ENCODE measurements at regions of chr7 and their contacts with region 1.

Region 1: GRCh38 chr7:129433847-129434674 is at the start of gene STRIP2:
- DNase-seq: peak; percentile 94
- H3K4me3 Mint-ChIP-seq: peak within 1 kb of the TSS; percentile 85
- H3K27ac Mint-ChIP-seq: peak within 1 kb of the TSS; percentile 71
- H3K4me1 Mint-ChIP-seq: peaks cover 38% of the 10 kb centered on the region
- H3K27me3 Mint-ChIP-seq: peaks cover 6% of the 10 kb centered on the region
- total RNA-seq, gene STRIP2: 28.3 to 29.7 TPM

Region 2: DNA sequence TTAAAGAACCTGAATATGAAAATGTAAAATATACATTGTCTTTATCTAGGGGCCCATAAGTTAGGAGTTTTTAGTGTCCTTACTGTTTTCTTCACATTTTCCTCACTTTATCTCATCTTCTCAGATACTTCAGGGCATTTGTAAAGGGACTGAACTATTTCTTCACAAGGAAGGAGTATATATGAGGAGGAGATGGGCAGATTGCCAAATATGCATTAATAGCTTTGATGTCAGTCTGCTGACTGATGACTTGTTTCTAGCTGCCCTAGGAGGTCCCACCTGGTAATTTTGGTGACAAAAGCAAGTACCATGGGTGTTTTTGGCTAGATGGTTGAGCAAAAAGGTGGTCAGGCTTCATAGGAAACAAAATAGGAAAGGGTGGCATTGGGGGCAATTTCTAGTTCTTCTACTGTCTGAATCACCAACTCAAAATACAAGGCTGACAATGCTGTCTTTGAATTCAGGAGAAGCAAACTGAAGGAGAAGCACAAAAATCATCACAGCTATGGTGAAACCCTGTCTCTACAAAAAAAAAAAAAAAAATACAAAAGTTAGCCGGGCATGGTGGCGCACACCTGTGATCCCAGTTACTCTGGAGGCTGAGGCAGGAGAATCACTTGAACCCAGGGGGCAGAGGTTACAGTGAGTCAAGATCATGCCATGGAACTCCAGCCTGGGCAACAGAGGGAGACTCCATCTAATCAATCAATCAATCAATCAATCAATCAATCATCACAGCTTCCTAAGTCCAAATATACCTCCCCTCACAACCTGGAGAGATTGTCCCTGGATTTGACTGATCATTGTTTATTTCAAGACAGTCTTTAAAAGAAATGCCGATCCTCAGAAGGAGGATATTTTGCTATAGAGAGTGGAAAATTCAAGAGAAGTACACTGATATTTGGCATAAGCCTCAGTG is 10.1 kb before region 1 on chr7:
- CTCF ChIA-PET with region 1: interaction called, 4 read pairs
- POLR2A ChIA-PET with region 1: interaction called, 12 read pairs
- DNase-seq: no peak
- H3K4me3 Mint-ChIP-seq: no peak overlapping the region
- H3K27ac Mint-ChIP-seq: no peak overlapping the region
- H3K4me1 Mint-ChIP-seq: peaks cover 4% of the 10 kb centered on the region
- H3K27me3 Mint-ChIP-seq: no peaks in the 10 kb centered on the region

Region 3: GRCh38 chr7:129468087-129468486 is 34.0 kb after region 1 on chr7:
- CTCF ChIA-PET with region 1: interaction called, 10 read pairs
- POLR2A ChIA-PET with region 1: interaction called, 4 read pairs
- DNase-seq: no peak
- H3K4me3 Mint-ChIP-seq: no peak overlapping the region
- H3K27ac Mint-ChIP-seq: no peak overlapping the region
- H3K4me1 Mint-ChIP-seq: peaks cover 12% of the 10 kb centered on the region
- H3K27me3 Mint-ChIP-seq: no peaks in the 10 kb centered on the region

Region 4: GRCh38 chr7:129644634-129645230 is 210.7 kb after region 1 on chr7:
- CTCF ChIA-PET with region 1: no interaction called
- POLR2A ChIA-PET with region 1: no interaction called
- DNase-seq: no peak
- H3K4me3 Mint-ChIP-seq: no peak overlapping the region
- H3K27ac Mint-ChIP-seq: no peak overlapping the region
- H3K4me1 Mint-ChIP-seq: peaks cover 13% of the 10 kb centered on the region
- H3K27me3 Mint-ChIP-seq: no peaks in the 10 kb centered on the region